Activated CD4-positive, alpha-beta memory T cell treated with anti-CD3 and anti-CD28 coated beads, Interleukin-2, amount 10 ng/mL, durations not matched to agents 7 days and 5 days (primary cell): ENCODE measurements at regions of chrX and their contacts with region 1.

Region 1: GRCh38 chrX:72181178-72182125 is at the start of gene PIN4:
- DNase-seq: peak; percentile 87
- H3K4me3 Mint-ChIP-seq: no peak within 1 kb of the TSS
- H3K27ac Mint-ChIP-seq: no peak within 1 kb of the TSS
- H3K4me1 Mint-ChIP-seq: peaks cover 16% of the 10 kb centered on the region
- H3K27me3 Mint-ChIP-seq: no peaks in the 10 kb centered on the region
- total RNA-seq, gene PIN4: 7.5 to 8.9 TPM

Region 2: GRCh38 chrX:72238721-72239475 is 57.4 kb after region 1 on chrX and contains the start of gene ERCC6L:
- CTCF ChIA-PET with region 1: interaction called, 3 read pairs
- POLR2A ChIA-PET with region 1: interaction called, 17 read pairs
- DNase-seq: peak; percentile 88
- H3K4me3 Mint-ChIP-seq: peak within 1 kb of the TSS; percentile 77
- H3K27ac Mint-ChIP-seq: peak within 1 kb of the TSS; percentile 52
- H3K4me1 Mint-ChIP-seq: peaks cover 24% of the 10 kb centered on the region
- H3K27me3 Mint-ChIP-seq: no peaks in the 10 kb centered on the region
- total RNA-seq, gene ERCC6L: 9.0 to 9.5 TPM